Psoas muscle (tissue), 8 donors: ENCODE measurements at regions of chr1 and their contacts with region 1.

Region 1: GRCh38 chr1:163137556-163138265 is 65.0 kb downstream of the RGS5 start:
- DNase-seq: no peak
- ATAC-seq: no peak
- H3K4me3 ChIP-seq: no peak overlapping the region
- H3K27ac ChIP-seq: no peak overlapping the region
- H3K4me1 ChIP-seq: no peaks in the 10 kb centered on the region
- H3K27me3 ChIP-seq: no peaks in the 10 kb centered on the region
- CTCF ChIP-seq: no peak

Region 2: DNA sequence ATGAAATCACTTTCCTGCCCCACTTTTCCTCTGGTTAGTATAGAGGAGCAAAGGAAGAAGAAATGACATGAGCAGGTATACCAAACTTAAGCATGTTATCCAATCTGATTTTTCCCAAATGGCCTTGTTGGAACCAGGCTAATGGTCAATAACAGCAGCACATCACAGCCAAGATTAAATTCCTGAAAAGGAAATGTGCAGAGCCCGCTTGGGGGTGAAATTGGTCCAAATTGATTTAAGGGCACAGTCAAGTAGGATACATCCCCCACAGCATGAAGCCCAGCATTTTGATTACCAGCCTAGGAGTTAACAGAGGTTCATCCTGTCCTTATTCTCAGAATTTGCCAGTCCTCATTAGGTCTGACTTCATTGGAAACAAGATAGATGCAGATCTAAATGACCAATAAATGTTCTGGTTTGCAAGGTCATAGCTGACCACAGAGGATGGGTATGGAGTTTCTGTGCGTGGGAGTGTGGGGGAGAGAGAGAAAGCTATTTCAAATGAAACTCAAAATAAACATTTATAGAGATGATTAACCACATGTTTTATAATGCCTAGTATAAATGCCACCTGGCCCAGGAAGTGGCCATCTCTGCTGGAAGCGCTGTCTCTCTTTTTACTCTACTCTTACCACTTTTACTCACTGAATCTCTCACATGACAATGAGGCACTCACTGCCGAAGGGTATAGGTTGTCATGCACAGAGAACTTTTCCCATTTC is 26.3 kb after region 1 on chr1:
- intact Hi-C with region 1: loop called in 1 of 2 experiments (anchors 2 kb)
- DNase-seq: no peak
- ATAC-seq: no peak
- H3K4me3 ChIP-seq: no peak overlapping the region
- H3K27ac ChIP-seq: no peak overlapping the region
- H3K4me1 ChIP-seq: no peaks in the 10 kb centered on the region
- H3K27me3 ChIP-seq: no peaks in the 10 kb centered on the region
- CTCF ChIP-seq: no peak